A549 (cell line): ENCODE measurements at regions of chr14 and their contacts with region 1.

Region 1: DNA sequence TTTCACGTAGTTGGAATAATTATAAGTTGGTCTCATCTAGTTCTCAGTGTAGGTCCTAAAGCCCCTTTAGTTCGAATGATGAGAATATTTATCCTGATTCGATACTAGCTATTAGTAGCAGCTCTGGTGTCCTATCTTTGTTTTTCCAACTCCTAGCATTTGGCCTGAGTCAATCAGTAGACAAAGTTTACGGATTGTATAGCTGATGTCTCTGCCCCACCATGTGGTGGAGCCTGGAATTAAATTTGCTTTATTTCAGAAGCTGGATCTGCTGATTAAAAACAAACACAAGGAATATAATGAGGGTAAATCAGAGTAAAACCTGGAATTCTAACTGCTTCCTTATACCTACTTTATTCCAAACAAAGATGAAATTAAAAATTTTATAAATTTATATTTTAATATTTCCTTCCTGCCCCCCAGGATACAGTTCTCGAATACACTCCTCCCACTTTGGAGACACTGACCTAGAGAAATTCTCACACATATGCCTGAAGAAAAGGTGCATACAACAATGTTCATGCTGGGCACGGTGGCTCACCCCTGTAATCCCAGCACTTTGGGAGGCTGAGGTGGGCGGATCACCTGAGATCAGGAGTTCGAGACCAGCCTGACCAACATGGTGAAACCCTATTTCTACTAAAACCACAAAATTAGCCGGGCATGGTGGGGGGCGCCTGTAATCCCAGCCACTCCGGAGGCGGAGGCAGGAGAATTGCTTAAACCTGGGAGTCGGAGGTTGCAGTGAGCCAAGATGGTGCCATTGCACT is 7.6 kb upstream of the BRMS1L start:
- DNase-seq: peak; percentile 57 to 59
- ATAC-seq: peak; percentile 70 to 83; a peak in 5 of 6 replicates
- H3K4me3 ChIP-seq: no peak overlapping the region
- H3K27ac ChIP-seq: no peak overlapping the region
- H3K4me1 ChIP-seq: 0 out of 3 replicates have a peak, but pooled peaks cover 5% of the 10 kb centered on the region
- CTCF ChIP-seq: peak; percentile 69
- EP300 ChIP-seq: no peak
- POLR2A ChIP-seq: no peak
- RAD21 ChIP-seq: peak; percentile 67 to 80

Region 2: GRCh38 chr14:35458442-35458841 is 360.1 kb before region 1 on chr14:
- CTCF ChIA-PET with region 1: no interaction called
- POLR2A ChIA-PET with region 1: no interaction called
- DNase-seq: no peak
- ATAC-seq: no peak
- H3K4me3 ChIP-seq: no peak overlapping the region
- H3K27ac ChIP-seq: no peak overlapping the region
- H3K4me1 ChIP-seq: no peaks in the 10 kb centered on the region
- CTCF ChIP-seq: no peak
- EP300 ChIP-seq: no peak
- POLR2A ChIP-seq: no peak
- RAD21 ChIP-seq: no peak

Region 3: GRCh38 chr14:35687335-35687939 is 131.1 kb before region 1 on chr14:
- CTCF ChIA-PET with region 1: interaction called, 11 read pairs
- POLR2A ChIA-PET with region 1: no interaction called
- DNase-seq: peak; percentile 4 to 60
- ATAC-seq: peak; percentile 70 to 85; a peak in 5 of 6 replicates
- H3K4me3 ChIP-seq: no peak overlapping the region
- H3K27ac ChIP-seq: no peak overlapping the region
- H3K4me1 ChIP-seq: no peaks in the 10 kb centered on the region
- CTCF ChIP-seq: peak; percentile 87
- EP300 ChIP-seq: no peak
- POLR2A ChIP-seq: no peak
- RAD21 ChIP-seq: peak; percentile 87 to 93

Region 4: DNA sequence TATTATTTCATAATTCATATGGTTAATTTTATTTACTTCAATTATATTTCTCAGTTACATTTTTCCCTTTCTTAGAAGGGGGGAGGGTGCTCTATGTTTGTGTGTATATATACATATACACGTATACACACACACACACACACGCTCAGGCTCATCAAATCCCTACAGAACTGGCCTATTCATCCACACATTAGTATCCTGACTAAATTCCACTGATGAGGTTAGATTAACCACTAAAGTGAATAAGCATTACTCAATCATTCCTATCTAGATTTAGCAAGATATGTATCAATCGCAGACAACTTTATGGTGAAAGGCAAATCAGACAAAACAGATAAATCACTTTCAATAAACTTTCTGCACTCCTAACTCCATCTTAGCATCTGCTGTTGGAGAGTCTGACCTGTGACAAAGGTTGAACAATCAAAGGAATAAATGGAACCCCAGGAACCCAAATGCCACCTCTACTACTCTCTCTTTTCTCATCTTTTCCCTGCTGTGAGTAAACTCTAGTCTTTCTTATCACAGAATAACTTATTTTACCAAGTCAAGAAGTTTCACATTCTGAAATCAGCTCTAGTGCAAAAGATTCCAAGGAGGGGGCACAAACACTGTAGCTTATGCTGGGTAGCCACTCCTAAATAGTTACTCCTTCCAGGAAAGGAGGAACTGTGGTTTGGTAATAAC is 77.0 kb before region 1 on chr14:
- CTCF ChIA-PET with region 1: no interaction called
- POLR2A ChIA-PET with region 1: no interaction called
- DNase-seq: no peak
- ATAC-seq: no peak
- H3K4me3 ChIP-seq: no peak overlapping the region
- H3K27ac ChIP-seq: no peak overlapping the region
- H3K4me1 ChIP-seq: no peaks in the 10 kb centered on the region
- CTCF ChIP-seq: no peak
- EP300 ChIP-seq: no peak
- POLR2A ChIP-seq: no peak
- RAD21 ChIP-seq: no peak

Region 5: GRCh38 chr14:35808076-35808652 is 10.4 kb before region 1 on chr14:
- CTCF ChIA-PET with region 1: interaction called, 12 read pairs
- POLR2A ChIA-PET with region 1: no interaction called
- DNase-seq: peak in 1 of 2 experiments; percentile 31
- ATAC-seq: peak; percentile 20 to 33; a peak in 2 of 6 replicates
- H3K4me3 ChIP-seq: peak overlapping the region; percentile 84
- H3K27ac ChIP-seq: peak overlapping the region; percentile 86 to 92
- H3K4me1 ChIP-seq: peaks cover 18% of the 10 kb centered on the region
- CTCF ChIP-seq: no peak
- EP300 ChIP-seq: no peak
- POLR2A ChIP-seq: no peak
- RAD21 ChIP-seq: no peak

Region 6: GRCh38 chr14:35835208-35835982 is 16.9 kb after region 1 on chr14:
- CTCF ChIA-PET with region 1: interaction called, 11 read pairs
- POLR2A ChIA-PET with region 1: no interaction called
- DNase-seq: no peak
- ATAC-seq: no peak
- H3K4me3 ChIP-seq: no peak overlapping the region
- H3K27ac ChIP-seq: no peak overlapping the region
- H3K4me1 ChIP-seq: no peaks in the 10 kb centered on the region
- CTCF ChIP-seq: no peak
- EP300 ChIP-seq: no peak
- POLR2A ChIP-seq: no peak
- RAD21 ChIP-seq: no peak

Region 7: DNA sequence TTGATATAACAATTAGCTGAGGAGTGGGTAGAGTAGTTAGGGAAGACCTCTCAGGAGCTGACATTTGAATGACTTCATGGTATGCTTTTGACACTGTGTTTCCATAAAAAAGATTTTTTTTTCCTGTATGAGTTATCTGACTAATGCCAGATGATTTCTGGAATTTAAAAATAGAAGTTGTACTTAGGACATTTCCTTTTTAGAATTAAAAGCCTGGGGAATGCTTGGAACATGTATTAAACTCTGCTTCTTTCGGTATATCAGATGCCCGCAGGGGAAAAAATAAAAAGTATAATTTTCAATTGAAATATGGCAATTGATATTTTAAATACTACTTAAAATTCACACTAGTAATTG is 48.7 kb after region 1 on chr14:
- CTCF ChIA-PET with region 1: no interaction called
- POLR2A ChIA-PET with region 1: no interaction called
- DNase-seq: no peak
- ATAC-seq: no peak
- H3K4me3 ChIP-seq: no peak overlapping the region
- H3K27ac ChIP-seq: no peak overlapping the region
- H3K4me1 ChIP-seq: no peaks in the 10 kb centered on the region
- CTCF ChIP-seq: no peak
- EP300 ChIP-seq: no peak
- POLR2A ChIP-seq: no peak
- RAD21 ChIP-seq: no peak

Region 8: GRCh38 chr14:36028218-36028617 is 209.7 kb after region 1 on chr14:
- CTCF ChIA-PET with region 1: no interaction called
- POLR2A ChIA-PET with region 1: no interaction called
- DNase-seq: peak in 1 of 2 experiments; percentile 11
- ATAC-seq: no peak
- H3K4me3 ChIP-seq: no peak overlapping the region
- H3K27ac ChIP-seq: no peak overlapping the region
- H3K4me1 ChIP-seq: no peaks in the 10 kb centered on the region
- CTCF ChIP-seq: 0 out of 3 replicates have a peak, but pooled peaks have one; percentile 14
- EP300 ChIP-seq: no peak
- POLR2A ChIP-seq: no peak
- RAD21 ChIP-seq: peak in 1 of 2 experiments; percentile 35; a peak in 2 of 5 replicates